Sciatic nerve (tissue), 2 donors: ENCODE measurements at regions of chr11 and their contacts with region 1.

Region 1: GRCh38 chr11:76588455-76589325 is 81.9 kb downstream of the LRRC32 start:
- DNase-seq: no peak
- ATAC-seq: peak; percentile 87

Region 2: GRCh38 chr11:75468534-75469340 is 1120.0 kb before region 1 on chr11:
- intact Hi-C with region 1: no loop called
- DNase-seq: peak; percentile 93
- ATAC-seq: peak; percentile 92

Region 3: GRCh38 chr11:75768112-75768908 is 820.4 kb before region 1 on chr11 and contains the start of gene DGAT2:
- intact Hi-C with region 1: no loop called
- DNase-seq: peak; percentile 79
- ATAC-seq: peak; percentile 83
- total RNA-seq, gene DGAT2: 20.3 TPM

Region 4: DNA sequence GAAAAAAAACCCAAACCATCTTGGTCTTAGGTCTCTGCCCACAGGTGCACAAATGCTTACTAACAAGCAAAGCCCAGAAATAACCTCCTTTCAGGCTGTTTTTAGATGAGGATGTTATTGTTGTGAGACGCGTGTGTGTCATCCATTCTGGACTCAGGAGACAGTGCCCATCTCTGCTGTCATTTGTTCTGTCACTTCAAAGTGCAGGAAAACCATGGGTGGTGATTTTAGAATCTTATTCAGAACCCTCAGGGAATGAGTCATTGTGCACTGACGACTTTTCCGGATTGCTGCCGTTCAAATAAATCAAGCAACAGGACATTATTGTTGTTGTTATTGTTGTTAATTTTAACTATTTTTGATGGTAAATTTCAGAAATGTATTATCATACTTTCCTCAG is 28.5 kb before region 1 on chr11:
- intact Hi-C with region 1: loop called (anchors 1 kb)
- DNase-seq: no peak
- ATAC-seq: no peak

Region 5: GRCh38 chr11:76577199-76577920 is 11.3 kb before region 1 on chr11:
- intact Hi-C with region 1: no loop called
- DNase-seq: no peak
- ATAC-seq: no peak